ENCODE measurements at regions of chr2 and their contacts with region 1.

Region 1: GRCh38 chr2:151828143-151828889 is at the start of gene ARL5A:
- DNase-seq: peak; percentile 89 to 98 (median 96)
- ATAC-seq: peak; percentile 97
- H3K4me3 ChIP-seq: peak within 1 kb of the TSS; percentile 93
- H3K4me3 Mint-ChIP-seq: peak within 1 kb of the TSS; percentile 84 to 97 (median 92)
- H3K27ac ChIP-seq: peak within 1 kb of the TSS; percentile 87
- H3K27ac Mint-ChIP-seq: peak within 1 kb of the TSS; percentile 90 to 96 (median 92)
- H3K4me1 ChIP-seq: peaks cover 18 to 26% of the 10 kb centered on the region in 2 donors
- H3K4me1 Mint-ChIP-seq: peaks cover 30 to 52% (median 40%) of the 10 kb centered on the region in 7 donors
- H3K27me3 ChIP-seq: no peaks in the 10 kb centered on the region
- H3K27me3 Mint-ChIP-seq: peaks cover 0 to 6% (median 0%) of the 10 kb centered on the region in 5 donors
- total RNA-seq, gene ARL5A: 25.8 to 43.3 (median 32.3) TPM

Region 2: GRCh38 chr2:151261231-151261976 is 566.9 kb before region 1 on chr2 and contains the start of gene RBM43:
- CTCF ChIA-PET with region 1: no interaction called
- POLR2A ChIA-PET with region 1: no interaction called
- intact Hi-C with region 1: loop called (anchors 1 to 5 kb)
- DNase-seq: peak; percentile 56 to 86 (median 80)
- ATAC-seq: peak; percentile 91
- H3K4me3 ChIP-seq: peak within 1 kb of the TSS; percentile 87
- H3K4me3 Mint-ChIP-seq: peak within 1 kb of the TSS; percentile 85 to 98 (median 96)
- H3K27ac ChIP-seq: peak within 1 kb of the TSS; percentile 96
- H3K27ac Mint-ChIP-seq: peak within 1 kb of the TSS; percentile 90 to 99 (median 99)
- H3K4me1 ChIP-seq: no peaks in the 10 kb centered on the region
- H3K4me1 Mint-ChIP-seq: peaks cover 11 to 47% (median 31%) of the 10 kb centered on the region in 7 donors
- H3K27me3 ChIP-seq: no peaks in the 10 kb centered on the region
- H3K27me3 Mint-ChIP-seq: no peaks in the 10 kb centered on the region
- total RNA-seq, gene RBM43: 6.4 to 19.2 (median 15.7) TPM

Region 3: GRCh38 chr2:151409601-151410484 is 418.5 kb before region 1 on chr2 and contains the start of gene RIF1:
- CTCF ChIA-PET with region 1: no interaction called
- POLR2A ChIA-PET with region 1: no interaction called
- intact Hi-C with region 1: loop called in 1 of 2 experiments (anchors 5 kb)
- DNase-seq: peak; percentile 65 to 78 (median 69)
- ATAC-seq: peak; percentile 95
- H3K4me3 ChIP-seq: peak within 1 kb of the TSS; percentile 73
- H3K4me3 Mint-ChIP-seq: peak within 1 kb of the TSS; percentile 91 to 99 (median 96)
- H3K27ac ChIP-seq: peak within 1 kb of the TSS; percentile 89
- H3K27ac Mint-ChIP-seq: peak within 1 kb of the TSS; percentile 88 to 98 (median 95)
- H3K4me1 ChIP-seq: peaks cover 6 to 14% of the 10 kb centered on the region in 2 donors
- H3K4me1 Mint-ChIP-seq: peaks cover 12 to 43% (median 35%) of the 10 kb centered on the region in 7 donors
- H3K27me3 ChIP-seq: no peaks in the 10 kb centered on the region
- H3K27me3 Mint-ChIP-seq: peaks cover 0 to 3% (median 0%) of the 10 kb centered on the region in 5 donors
- total RNA-seq, gene RIF1: 39.8 to 74.0 (median 66.7) TPM

Region 4: DNA sequence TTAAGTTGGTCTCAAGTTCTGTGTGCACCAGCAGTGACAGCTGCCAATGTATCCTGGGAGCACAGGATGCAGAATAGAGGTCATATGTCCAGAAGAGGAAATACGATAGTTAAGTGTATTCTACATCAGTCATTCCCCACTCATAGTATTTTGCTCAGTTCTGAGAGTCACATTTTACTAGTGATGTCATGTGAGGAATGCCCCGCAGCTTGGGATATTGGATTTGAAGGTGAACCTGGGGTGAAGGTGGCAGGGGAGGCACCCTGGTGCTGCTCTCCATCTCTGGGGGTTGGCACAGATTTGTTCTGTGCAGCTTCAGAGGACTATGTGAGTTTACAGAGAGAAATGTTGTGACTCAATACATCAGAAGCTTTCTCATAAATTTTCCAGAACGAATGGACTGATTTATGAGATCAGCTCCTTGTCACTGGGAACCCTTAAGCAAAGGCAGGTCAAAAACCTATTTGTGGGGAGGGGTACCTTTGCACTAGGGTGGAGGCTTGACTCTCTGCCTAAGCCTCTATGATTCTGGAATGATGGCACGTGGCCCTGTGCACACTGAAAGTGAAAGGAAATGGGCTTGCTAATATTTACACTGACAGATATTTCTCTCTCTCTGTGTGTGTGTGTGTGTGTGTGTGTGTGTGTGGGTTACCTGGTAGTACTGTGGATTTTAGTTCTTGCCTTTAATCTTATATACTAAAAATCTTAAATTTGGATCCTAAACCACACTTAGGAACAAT is 190.0 kb before region 1 on chr2:
- CTCF ChIA-PET with region 1: interaction called, 6 read pairs
- POLR2A ChIA-PET with region 1: interaction called, 22 read pairs
- intact Hi-C with region 1: loop called (anchors 1 kb)
- DNase-seq: peak in 8 of 9 donors; percentile 23 to 66 (median 52)
- ATAC-seq: peak; percentile 59
- H3K4me3 ChIP-seq: peak overlapping the region; percentile 42
- H3K4me3 Mint-ChIP-seq: peak overlapping the region; percentile 18 to 89 (median 84)
- H3K27ac ChIP-seq: peak overlapping the region; percentile 69
- H3K27ac Mint-ChIP-seq: peak overlapping the region; percentile 90 to 97 (median 94)
- H3K4me1 ChIP-seq: peaks cover 33 to 40% of the 10 kb centered on the region in 2 donors
- H3K4me1 Mint-ChIP-seq: peaks cover 32 to 57% (median 38%) of the 10 kb centered on the region in 7 donors
- H3K27me3 ChIP-seq: no peaks in the 10 kb centered on the region
- H3K27me3 Mint-ChIP-seq: no peaks in the 10 kb centered on the region

Region 5: DNA sequence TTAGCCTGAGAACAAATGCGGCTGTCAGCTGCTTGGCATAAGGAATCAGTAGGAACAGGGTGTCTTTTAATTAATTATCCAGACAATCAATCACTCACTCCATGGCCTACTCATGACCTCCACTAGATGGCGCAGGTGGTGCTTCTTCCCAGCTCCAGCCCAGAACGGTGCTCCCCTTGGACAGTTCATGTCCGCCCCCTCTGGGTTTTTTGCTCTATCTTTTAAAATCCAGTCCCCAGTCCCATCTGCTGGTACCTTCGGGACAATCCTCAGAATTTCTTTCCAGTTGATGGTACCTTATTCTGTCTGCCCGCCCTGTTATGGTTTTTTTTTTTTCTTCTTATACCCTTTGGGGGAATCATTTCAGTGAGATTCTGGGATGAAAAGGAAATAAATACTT is 170.7 kb after region 1 on chr2:
- CTCF ChIA-PET with region 1: no interaction called
- POLR2A ChIA-PET with region 1: no interaction called
- intact Hi-C with region 1: loop called in 1 of 2 experiments (anchors 5 kb)
- DNase-seq: peak in 7 of 9 donors; percentile 11 to 38 (median 14)
- ATAC-seq: peak; percentile 77
- H3K4me3 ChIP-seq: no peak overlapping the region
- H3K4me3 Mint-ChIP-seq: no peak overlapping the region
- H3K27ac ChIP-seq: no peak overlapping the region
- H3K27ac Mint-ChIP-seq: no peak overlapping the region
- H3K4me1 ChIP-seq: no peaks in the 10 kb centered on the region
- H3K4me1 Mint-ChIP-seq: peaks cover 0 to under 1% (median 0%) of the 10 kb centered on the region in 7 donors
- H3K27me3 ChIP-seq: no peaks in the 10 kb centered on the region
- H3K27me3 Mint-ChIP-seq: peaks cover 0 to 1% (median 0%) of the 10 kb centered on the region in 5 donors